ENCODE measurements at regions of chr13 and their contacts with region 1.

Region 1: GRCh38 chr13:49996951-49997895 is at the start of gene TRIM13:
- DNase-seq: peak; percentile 92
- H3K4me3 ChIP-seq: peak within 1 kb of the TSS; percentile 81 to 99 (median 88)
- H3K27ac ChIP-seq: peak within 1 kb of the TSS; percentile 96 to 100 (median 98)
- H3K4me1 ChIP-seq: peaks cover 31 to 52% (median 49%) of the 10 kb centered on the region in 4 donors
- H3K27me3 ChIP-seq: no peaks in the 10 kb centered on the region
- CTCF ChIP-seq: peak; percentile 69 to 86 (median 73)
- EP300 ChIP-seq: no peak
- POLR2A ChIP-seq: no peak
- total RNA-seq, gene TRIM13: 5.6 to 30.6 (median 15.0) TPM

Region 2: GRCh38 chr13:49585220-49586157 is 411.7 kb before region 1 on chr13 and contains the start of gene RCBTB1:
- in situ Hi-C with region 1: no loop called
- intact Hi-C with region 1: loop called (anchors 5 kb)
- DNase-seq: peak; percentile 69
- H3K4me3 ChIP-seq: peak within 1 kb of the TSS; percentile 42 to 91 (median 85)
- H3K27ac ChIP-seq: peak within 1 kb of the TSS; percentile 81 to 90 (median 86)
- H3K4me1 ChIP-seq: peaks cover 0 to 20% (median 14%) of the 10 kb centered on the region in 4 donors
- H3K27me3 ChIP-seq: no peaks in the 10 kb centered on the region
- CTCF ChIP-seq: no peak
- EP300 ChIP-seq: no peak
- POLR2A ChIP-seq: peak; percentile 28
- total RNA-seq, gene RCBTB1: 4.9 to 10.4 (median 7.7) TPM

Region 3: GRCh38 chr13:49954674-49955491 is 42.3 kb before region 1 on chr13:
- in situ Hi-C with region 1: no loop called
- intact Hi-C with region 1: no loop called
- DNase-seq: peak; percentile 47
- H3K4me3 ChIP-seq: no peak overlapping the region
- H3K27ac ChIP-seq: peak overlapping the region; percentile 63 to 79 (median 69)
- H3K4me1 ChIP-seq: peaks cover 5 to 27% (median 13%) of the 10 kb centered on the region in 4 donors
- H3K27me3 ChIP-seq: no peaks in the 10 kb centered on the region
- CTCF ChIP-seq: peak in 2 of 5 experiments; percentile 32 to 50
- EP300 ChIP-seq: no peak
- POLR2A ChIP-seq: no peak

Region 4: DNA sequence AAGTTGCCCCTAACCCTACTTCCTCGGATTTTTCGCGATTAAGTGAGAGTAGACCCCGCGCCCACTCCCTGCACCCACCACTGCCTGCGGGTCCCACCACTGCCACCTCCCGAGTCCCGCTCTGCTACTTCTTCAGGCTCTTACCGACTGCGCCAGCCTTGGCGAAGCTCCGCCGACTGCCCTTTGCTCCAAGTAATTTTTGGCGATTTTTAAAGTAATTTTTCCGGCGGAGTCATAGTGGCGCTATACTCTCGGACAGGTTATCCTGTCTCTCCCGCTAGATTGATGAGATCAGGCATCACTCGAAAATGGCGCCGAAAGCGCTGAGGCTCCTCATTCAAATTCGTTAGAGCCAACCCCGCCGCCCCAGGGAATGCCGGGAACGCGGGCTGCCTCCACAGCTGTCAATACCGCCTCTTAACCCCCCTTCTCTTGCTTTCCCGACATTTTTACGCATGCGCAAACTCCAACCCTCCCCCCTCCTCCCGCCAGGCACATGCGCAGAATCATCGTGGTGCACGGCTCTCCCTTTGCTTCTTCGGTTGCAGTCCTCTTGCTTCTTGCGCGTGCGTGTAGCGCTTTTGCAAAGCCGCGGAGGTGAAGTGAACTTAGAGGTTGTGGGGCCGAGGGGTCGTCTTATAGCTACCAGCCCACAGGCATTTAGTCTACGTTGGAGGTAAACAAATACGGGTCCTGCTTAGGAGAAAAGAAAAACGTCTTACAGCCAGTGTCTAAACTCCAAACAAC is 84.6 kb after region 1 on chr13:
- in situ Hi-C with region 1: loop called in 1 of 4 experiments (anchors 10 kb)
- intact Hi-C with region 1: loop called (anchors 2 kb)
- DNase-seq: peak; percentile 99
- H3K4me3 ChIP-seq: peak overlapping the region; percentile 62 to 86 (median 83)
- H3K27ac ChIP-seq: peak overlapping the region; percentile 91 to 96 (median 94)
- H3K4me1 ChIP-seq: peaks cover 5 to 65% (median 24%) of the 10 kb centered on the region in 4 donors
- H3K27me3 ChIP-seq: no peaks in the 10 kb centered on the region
- CTCF ChIP-seq: peak in 2 of 5 experiments; percentile 7 to 33
- EP300 ChIP-seq: no peak
- POLR2A ChIP-seq: peak; percentile 62

Region 5: GRCh38 chr13:50529154-50529882 is 532.1 kb after region 1 on chr13:
- in situ Hi-C with region 1: loop called in 1 of 4 experiments (anchors 25 kb)
- intact Hi-C with region 1: no loop called
- DNase-seq: peak; percentile 84
- H3K4me3 ChIP-seq: no peak overlapping the region
- H3K27ac ChIP-seq: peak overlapping the region; percentile 52 to 76 (median 64)
- H3K4me1 ChIP-seq: peaks cover 20 to 43% (median 21%) of the 10 kb centered on the region in 4 donors
- H3K27me3 ChIP-seq: no peaks in the 10 kb centered on the region
- CTCF ChIP-seq: no peak
- EP300 ChIP-seq: no peak
- POLR2A ChIP-seq: no peak

Region 6: GRCh38 chr13:50911937-50912795 is 914.9 kb after region 1 on chr13:
- in situ Hi-C with region 1: loop called (anchors 25 kb)
- intact Hi-C with region 1: no loop called
- DNase-seq: peak; percentile 94
- H3K4me3 ChIP-seq: no peak overlapping the region
- H3K27ac ChIP-seq: peak overlapping the region; percentile 89 to 94 (median 90)
- H3K4me1 ChIP-seq: peaks cover 6 to 54% (median 20%) of the 10 kb centered on the region in 4 donors
- H3K27me3 ChIP-seq: no peaks in the 10 kb centered on the region
- CTCF ChIP-seq: peak; percentile 73 to 85 (median 83)
- EP300 ChIP-seq: no peak
- POLR2A ChIP-seq: no peak